Caco-2 (cell line): ENCODE measurements at regions of chr19 and their contacts with region 1.

Region 1: DNA sequence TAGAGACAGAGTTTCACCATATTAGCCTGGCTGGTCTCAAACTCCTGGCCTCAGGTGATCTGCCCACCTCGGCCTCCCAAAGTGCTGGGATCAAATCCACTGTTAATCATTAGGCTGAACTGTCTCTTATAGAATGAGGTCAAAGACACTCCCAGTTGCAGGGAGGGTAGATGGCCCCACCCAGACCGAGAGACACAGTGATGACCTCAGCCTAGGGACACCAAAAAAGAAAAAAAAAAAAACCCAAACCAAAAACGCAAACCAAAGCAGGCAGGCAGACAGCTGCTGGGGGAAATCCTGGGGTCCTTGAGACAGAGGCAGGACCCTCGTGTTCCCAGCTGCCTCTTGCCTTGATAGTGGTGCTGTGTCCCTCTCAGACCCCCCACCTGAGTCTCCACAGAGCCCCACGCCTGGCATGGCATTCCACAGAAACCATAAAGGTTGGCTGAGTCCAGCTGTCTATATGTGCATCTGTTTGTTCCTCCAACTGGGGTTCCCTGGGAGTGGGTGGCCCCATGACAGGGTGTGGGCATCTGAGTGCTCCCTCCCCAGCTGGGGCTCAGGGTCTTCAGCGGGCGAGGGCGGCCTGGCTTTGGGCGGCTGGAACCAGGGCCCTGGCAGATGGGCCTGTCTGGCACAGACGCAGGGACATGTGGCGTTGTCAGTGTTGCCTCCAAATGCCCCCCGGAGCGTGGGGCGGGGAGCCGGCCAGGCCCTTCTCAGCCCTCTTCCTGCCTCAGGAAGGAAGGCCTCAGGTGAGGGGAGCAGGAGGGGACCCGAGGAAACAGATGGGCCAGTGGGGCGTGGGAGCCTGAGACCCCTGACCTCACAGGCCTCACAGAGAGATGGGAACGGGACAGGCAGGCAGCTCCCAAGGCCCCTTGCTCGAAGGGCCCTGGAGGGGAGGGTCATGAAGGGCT is 5.2 kb downstream of the DAND5 start:
- DNase-seq: no peak
- H3K4me3 ChIP-seq: no peak overlapping the region
- H3K4me3 Mint-ChIP-seq: no peak overlapping the region
- H3K27ac Mint-ChIP-seq: no peak overlapping the region
- H3K4me1 ChIP-seq: no peaks in the 10 kb centered on the region
- H3K4me1 Mint-ChIP-seq: peaks cover 7% of the 10 kb centered on the region
- H3K27me3 ChIP-seq: no peaks in the 10 kb centered on the region
- H3K27me3 Mint-ChIP-seq: no peaks in the 10 kb centered on the region
- CTCF ChIP-seq: no peak

Region 2: DNA sequence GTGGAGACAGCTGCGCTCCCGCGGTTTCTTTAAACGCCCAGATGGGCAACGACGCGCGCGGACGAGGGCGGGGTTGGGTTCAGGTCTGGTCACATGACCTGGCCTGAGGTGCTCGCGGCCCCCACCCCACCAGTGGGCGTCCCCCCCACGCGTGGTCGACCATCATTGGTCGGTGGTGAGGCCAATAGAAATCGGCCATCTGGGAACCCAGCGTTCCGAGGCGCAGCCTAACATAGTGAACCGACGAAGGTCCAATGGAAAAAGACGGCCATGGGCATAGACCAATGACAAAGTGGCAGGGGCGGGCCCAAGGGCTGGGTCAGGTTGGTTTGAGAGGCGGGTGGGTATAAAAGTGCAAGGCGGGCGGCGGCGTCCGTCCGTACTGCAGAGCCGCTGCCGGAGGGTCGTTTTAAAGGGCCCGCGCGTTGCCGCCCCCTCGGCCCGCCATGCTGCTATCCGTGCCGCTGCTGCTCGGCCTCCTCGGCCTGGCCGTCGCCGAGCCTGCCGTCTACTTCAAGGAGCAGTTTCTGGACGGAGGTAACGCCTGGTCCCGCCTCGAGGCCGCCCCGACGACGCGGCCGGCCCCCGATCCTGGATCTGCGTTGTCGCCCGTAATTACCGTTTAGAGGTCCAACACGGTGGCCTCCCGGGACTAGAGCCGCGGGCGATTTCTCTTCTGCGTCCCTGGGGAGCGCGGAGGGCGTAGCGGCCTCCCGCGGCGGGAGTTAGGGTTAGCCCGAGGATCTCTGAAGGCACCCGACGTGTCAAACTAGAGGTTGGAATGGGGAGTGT is 36.1 kb before region 1 on chr19 and contains the start of gene CALR:
- CTCF ChIA-PET with region 1: no interaction called
- POLR2A ChIA-PET with region 1: no interaction called
- intact Hi-C with region 1: no loop called
- DNase-seq: peak; percentile 99
- H3K4me3 ChIP-seq: peak within 1 kb of the TSS; percentile 100
- H3K4me3 Mint-ChIP-seq: peak within 1 kb of the TSS; percentile 97
- H3K27ac Mint-ChIP-seq: peak within 1 kb of the TSS; percentile 97
- H3K4me1 ChIP-seq: peaks cover 23% of the 10 kb centered on the region; the same call in 1 of the 2 replicates
- H3K4me1 Mint-ChIP-seq: peaks cover 13% of the 10 kb centered on the region
- H3K27me3 ChIP-seq: no peaks in the 10 kb centered on the region
- H3K27me3 Mint-ChIP-seq: peaks cover 3% of the 10 kb centered on the region
- CTCF ChIP-seq: peak in 1 of 2 experiments; percentile 23
- total RNA-seq, gene CALR: 707 and 767 TPM in 2 replicates

Region 3: DNA sequence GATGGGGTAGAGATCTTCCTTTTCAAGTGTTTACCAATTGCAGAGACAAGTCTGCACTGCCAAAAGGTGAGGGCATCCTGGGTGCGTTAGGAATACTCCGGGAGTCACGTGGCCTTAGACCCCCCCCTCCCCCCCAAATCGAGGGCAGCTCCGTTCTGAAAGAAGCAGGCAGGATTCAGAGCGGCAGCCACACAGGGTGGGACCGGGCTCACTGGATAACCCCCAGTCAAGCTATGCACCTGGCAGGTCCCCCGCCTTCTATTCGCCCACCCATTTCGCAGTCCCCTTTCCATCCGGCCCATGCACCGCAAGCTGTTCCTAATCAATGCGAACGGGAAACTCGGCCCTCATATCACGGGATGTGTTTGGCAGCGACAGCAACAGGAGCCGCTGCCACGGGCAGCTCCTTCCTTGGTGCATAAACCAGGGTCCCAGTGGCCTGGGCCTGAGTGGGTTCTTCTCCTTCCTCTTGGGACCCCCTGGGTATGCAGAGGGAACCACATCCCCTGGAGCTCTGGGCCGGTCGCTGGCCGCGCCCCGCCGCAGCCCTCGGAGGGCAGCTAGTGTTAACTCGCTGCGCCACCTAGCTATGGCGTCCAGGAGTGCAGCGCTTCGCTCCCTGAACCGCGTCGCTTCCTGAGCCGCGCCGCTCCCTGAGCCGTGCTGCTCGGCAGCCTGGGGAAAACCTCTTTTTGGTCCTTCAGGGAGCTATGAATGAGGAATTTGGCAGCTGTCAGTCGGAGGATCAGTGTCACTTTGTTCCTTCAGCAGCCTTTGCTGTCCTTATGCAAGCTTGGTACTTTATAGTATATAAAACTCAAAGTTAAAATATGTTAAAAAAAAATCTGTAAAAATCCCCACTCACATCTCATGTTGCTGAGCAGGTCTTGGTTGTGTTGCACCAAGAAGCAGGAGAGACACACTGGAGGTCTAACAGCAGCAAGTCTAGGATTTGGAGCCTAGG is 86.7 kb after region 1 on chr19:
- CTCF ChIA-PET with region 1: interaction called, 84 read pairs
- POLR2A ChIA-PET with region 1: no interaction called
- intact Hi-C with region 1: loop called (anchors 1 kb)
- DNase-seq: peak; percentile 56 to 82
- H3K4me3 ChIP-seq: peak overlapping the region; percentile 21
- H3K4me3 Mint-ChIP-seq: peak overlapping the region; percentile 37
- H3K27ac Mint-ChIP-seq: no peak overlapping the region
- H3K4me1 ChIP-seq: no peaks in the 10 kb centered on the region
- H3K4me1 Mint-ChIP-seq: no peaks in the 10 kb centered on the region
- H3K27me3 ChIP-seq: peaks cover 3% of the 10 kb centered on the region
- H3K27me3 Mint-ChIP-seq: peaks cover 19% of the 10 kb centered on the region
- CTCF ChIP-seq: peak; percentile 83 to 91